HEK293T (cell line): ENCODE measurements at regions of chr12 and their contacts with region 1.

Region 1: DNA sequence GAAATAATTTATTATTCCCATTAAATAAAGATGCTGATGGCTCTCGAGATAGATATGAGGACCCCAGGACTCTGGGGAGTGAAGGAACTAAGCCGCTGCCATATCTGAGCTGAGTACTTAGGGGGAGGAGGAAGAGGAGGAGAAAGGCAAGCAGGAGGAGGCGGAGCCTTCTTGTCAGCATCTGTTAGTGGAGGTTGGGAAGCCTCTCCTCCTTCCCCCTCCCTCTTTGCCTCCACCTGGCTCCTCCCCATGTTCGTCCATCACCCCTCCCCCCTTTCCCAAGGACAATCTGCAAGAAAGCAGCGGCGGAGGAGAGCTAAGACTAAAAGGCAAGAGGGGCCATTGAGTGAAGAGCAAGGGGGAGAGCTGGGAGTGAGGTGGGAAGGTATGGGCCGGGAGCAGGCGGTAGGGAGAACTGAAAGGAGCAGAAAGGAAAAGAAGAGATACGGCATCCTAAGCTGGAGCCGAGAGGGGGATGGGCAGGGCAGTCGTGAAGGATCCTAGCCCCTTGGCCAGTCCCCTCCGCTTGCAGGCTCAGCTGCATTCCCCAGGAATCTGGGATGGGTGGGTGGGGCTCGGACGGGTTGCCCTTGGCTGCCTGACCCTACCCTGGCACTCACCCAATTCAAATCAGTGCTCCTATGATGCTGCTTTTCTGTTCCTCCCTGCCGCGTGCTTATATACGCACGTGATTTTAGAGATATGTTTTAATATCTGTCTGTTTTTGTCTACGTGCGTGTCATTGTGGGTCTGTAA is at the start of gene PFKM:
- DNase-seq: peak; percentile 93

Region 2: DNA sequence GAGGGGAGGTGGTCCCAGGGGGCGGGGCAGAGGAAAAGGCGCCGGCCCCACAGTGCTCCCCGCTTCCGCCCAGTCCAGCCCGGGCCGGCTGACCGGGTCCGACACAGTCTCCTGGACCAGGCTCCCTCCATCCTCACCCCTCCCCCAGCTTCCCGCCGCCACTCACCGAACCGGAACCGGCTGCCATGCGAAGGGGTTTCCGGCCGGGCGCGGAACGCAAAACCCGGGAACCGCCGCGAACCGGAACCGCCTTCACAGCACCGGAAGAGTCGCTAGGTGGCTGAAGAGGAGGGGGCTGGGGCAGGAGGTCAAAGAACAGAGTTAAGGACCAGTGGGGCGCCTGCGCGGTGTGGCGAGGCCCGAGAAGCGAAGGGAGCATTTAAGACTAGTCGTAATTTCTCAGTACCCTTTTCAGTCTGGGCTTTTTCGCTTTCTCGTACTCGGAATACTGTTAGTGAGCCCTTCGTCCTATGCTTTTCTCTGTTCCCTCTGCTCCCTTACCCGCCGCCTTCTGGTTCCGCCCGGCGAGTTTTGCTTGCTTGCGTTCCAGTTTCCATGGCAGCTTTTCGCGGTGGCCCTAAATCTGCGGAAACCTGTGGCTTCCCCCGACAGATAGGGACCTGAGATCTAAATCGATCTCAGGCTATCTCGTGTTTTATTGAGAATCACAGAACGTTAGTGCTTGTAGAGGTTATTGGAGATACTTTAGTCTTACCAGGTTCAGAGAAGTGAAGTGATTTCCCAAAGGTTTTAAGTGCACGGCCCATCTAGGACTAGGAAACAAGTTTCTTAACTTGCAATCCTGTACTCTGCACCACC is 13.2 kb before region 1 on chr12 and contains the start of gene SENP1:
- CTCF ChIA-PET with region 1: no interaction called
- POLR2A ChIA-PET with region 1: interaction called, 38 read pairs
- DNase-seq: peak; percentile 80

Region 3: DNA sequence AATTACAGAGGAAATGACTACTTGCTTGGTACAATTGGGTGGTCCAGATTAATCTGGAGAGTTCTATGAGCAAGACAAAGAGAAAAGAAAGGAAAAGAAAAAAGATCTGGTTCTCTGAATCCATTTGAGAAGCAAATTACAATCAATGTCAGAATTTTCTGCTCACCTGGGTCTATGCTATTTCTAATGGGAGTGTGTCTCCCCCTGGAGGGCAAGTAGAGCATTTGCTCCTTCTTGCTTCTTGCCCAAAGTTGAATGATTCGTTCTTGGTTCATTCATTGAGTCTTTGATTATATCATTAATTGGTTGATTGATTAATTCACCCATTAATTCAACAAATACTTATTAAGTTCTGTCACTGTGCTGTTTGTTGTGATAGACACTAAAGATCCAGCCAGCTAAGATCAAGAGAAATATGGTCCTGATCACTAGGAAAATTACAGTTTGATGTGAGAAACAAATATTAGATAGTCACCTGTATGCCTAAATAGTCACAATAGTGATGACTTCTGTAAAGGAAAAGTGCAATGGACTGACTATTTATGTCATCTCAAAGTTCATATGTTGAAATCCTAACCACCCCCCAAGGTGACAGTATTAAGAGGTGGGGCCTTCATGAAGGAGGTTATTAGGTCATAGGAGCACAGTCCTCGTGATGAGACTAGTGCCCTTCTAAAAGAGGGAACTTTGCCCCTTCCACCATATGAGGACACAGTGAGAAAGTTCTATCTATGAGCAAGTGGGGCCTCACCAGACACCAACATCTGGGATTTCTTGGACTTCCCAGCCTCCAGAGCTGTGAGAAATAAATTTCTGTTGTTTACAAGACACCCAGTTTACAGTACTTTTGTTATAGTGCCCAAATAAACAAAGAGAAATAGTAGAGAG is 46.1 kb after region 1 on chr12:
- CTCF ChIA-PET with region 1: no interaction called
- POLR2A ChIA-PET with region 1: no interaction called
- DNase-seq: peak; percentile 56